ENCODE measurements at regions of chr10 and their contacts with region 1.

Region 1: GRCh38 chr10:33412653-33413361 is 78.3 kb upstream of the NRP1 start:
- DNase-seq: peak; percentile 58
- H3K4me3 ChIP-seq: no peak overlapping the region; the same call in 1 of the 2 replicates
- H3K27ac ChIP-seq: peak overlapping the region; percentile 62
- H3K27me3 ChIP-seq: no peaks in the 10 kb centered on the region
- CTCF ChIP-seq: no peak

Region 2: GRCh38 chr10:33330543-33331378 is 82.0 kb before region 1 on chr10:
- CTCF ChIA-PET with region 1: no interaction called
- POLR2A ChIA-PET with region 1: interaction called, 11 read pairs
- DNase-seq: peak; percentile 80
- H3K4me3 ChIP-seq: peak overlapping the region; percentile 93
- H3K27ac ChIP-seq: no peak overlapping the region
- H3K27me3 ChIP-seq: no peaks in the 10 kb centered on the region
- CTCF ChIP-seq: peak; percentile 97

Region 3: DNA sequence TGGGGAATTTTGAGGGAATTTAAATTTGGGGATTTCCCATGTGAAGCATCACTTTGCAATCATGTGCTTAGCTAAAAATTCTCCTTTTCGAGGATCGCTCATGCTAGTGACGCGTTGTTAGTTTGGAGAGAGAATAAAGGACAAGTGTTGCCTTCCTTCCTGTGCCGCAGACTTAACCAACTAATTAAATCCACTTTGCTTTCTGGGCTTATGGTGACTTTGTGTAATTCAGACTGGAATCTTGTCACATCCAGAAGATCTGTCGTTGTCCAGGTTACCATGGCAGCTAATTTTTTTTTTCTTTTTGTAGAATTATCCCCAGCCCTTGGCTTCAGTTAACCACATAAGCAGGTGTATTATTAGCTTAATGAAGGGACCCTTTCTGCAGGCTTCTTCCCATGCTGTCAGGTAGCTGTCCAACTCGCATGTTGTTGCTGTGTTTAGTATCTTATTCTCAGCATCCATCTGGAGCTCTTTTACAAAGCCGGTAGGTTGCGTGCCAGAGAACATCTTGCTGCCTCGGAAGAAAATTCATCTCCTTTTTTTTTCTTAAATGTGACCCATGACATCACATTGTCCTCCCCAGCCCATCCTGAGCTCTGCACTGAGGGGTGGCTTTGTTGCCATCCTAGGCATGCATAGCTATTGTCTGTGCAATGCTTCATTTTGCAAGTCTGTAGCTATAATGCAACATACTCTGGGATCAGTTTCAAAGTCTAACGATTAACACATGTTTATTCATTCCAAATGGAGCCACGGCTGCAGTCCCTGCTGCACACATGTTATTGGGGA is 31.2 kb before region 1 on chr10:
- CTCF ChIA-PET with region 1: no interaction called
- POLR2A ChIA-PET with region 1: interaction called, 13 read pairs
- DNase-seq: peak; percentile 70
- H3K4me3 ChIP-seq: no peak overlapping the region
- H3K27ac ChIP-seq: no peak overlapping the region
- H3K27me3 ChIP-seq: no peaks in the 10 kb centered on the region
- CTCF ChIP-seq: no peak

Measured in AG04450 (cell line).